CD4-positive, alpha-beta memory T cell (primary cell): ENCODE measurements at regions of chr6 and their contacts with region 1.

Region 1: GRCh38 chr6:149545754-149546528 is at the start of gene PPIL4:
- DNase-seq: peak; percentile 94 to 98 (median 97)
- H3K4me3 ChIP-seq: peak within 1 kb of the TSS; percentile 68 to 74
- H3K4me3 Mint-ChIP-seq: peak within 1 kb of the TSS; percentile 97 to 100 (median 98)
- H3K27ac ChIP-seq: peak within 1 kb of the TSS; percentile 100
- H3K27ac Mint-ChIP-seq: peak within 1 kb of the TSS; percentile 98 to 100 (median 100)
- H3K4me1 ChIP-seq: peaks cover 32% of the 10 kb centered on the region
- H3K4me1 Mint-ChIP-seq: peaks cover 27 to 50% (median 38%) of the 10 kb centered on the region in 4 donors
- H3K27me3 ChIP-seq: no peaks in the 10 kb centered on the region
- H3K27me3 Mint-ChIP-seq: peaks cover 0 to 3% of the 10 kb centered on the region in 2 donors
- total RNA-seq, gene PPIL4: 33.1 to 35.7 TPM

Region 2: DNA sequence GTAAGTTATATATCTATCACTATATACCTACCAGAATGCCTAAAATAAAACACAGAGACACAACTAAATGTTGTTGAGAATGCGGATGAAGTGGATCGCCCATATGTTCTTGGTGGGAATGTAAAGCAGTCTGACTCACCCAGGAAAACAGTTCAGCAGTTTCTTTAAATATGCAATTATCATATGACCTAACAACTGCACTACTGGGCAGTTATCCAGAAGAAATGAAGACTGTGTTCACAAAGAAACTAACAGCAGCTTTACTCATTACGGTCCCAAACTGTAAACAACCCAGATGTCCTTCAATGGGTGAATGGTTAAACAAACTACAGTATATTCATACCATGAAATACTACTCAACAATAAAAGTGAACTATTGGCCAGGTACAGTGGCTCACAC is 46.9 kb before region 1 on chr6:
- CTCF ChIA-PET with region 1: interaction called, 3 read pairs
- POLR2A ChIA-PET with region 1: interaction called, 15 read pairs
- intact Hi-C with region 1: loop called (anchors 5 kb)
- DNase-seq: no peak
- H3K4me3 ChIP-seq: no peak overlapping the region
- H3K4me3 Mint-ChIP-seq: no peak overlapping the region
- H3K27ac ChIP-seq: no peak overlapping the region
- H3K27ac Mint-ChIP-seq: peak overlapping the region in 6 of 7 donors; percentile 51 to 96 (median 84)
- H3K4me1 ChIP-seq: peaks cover 52% of the 10 kb centered on the region
- H3K4me1 Mint-ChIP-seq: peaks cover 29 to 61% (median 40%) of the 10 kb centered on the region in 4 donors
- H3K27me3 ChIP-seq: no peaks in the 10 kb centered on the region
- H3K27me3 Mint-ChIP-seq: no peaks in the 10 kb centered on the region

Region 3: GRCh38 chr6:149648148-149649145 is 102.5 kb after region 1 on chr6 and contains the start of gene KATNA1:
- CTCF ChIA-PET with region 1: interaction called, 3 read pairs
- POLR2A ChIA-PET with region 1: interaction called, 4 read pairs
- intact Hi-C with region 1: loop called (anchors 1 kb)
- DNase-seq: peak; percentile 83 to 87 (median 84)
- H3K4me3 ChIP-seq: peak within 1 kb of the TSS; percentile 61 to 84
- H3K4me3 Mint-ChIP-seq: peak within 1 kb of the TSS; percentile 82 to 94 (median 92)
- H3K27ac ChIP-seq: peak within 1 kb of the TSS; percentile 74
- H3K27ac Mint-ChIP-seq: peak within 1 kb of the TSS; percentile 85 to 95 (median 90)
- H3K4me1 ChIP-seq: peaks cover 35% of the 10 kb centered on the region
- H3K4me1 Mint-ChIP-seq: peaks cover 14 to 45% (median 25%) of the 10 kb centered on the region in 4 donors
- H3K27me3 ChIP-seq: no peaks in the 10 kb centered on the region
- H3K27me3 Mint-ChIP-seq: no peaks in the 10 kb centered on the region
- total RNA-seq, gene KATNA1: 18.2 to 21.4 TPM

Region 4: DNA sequence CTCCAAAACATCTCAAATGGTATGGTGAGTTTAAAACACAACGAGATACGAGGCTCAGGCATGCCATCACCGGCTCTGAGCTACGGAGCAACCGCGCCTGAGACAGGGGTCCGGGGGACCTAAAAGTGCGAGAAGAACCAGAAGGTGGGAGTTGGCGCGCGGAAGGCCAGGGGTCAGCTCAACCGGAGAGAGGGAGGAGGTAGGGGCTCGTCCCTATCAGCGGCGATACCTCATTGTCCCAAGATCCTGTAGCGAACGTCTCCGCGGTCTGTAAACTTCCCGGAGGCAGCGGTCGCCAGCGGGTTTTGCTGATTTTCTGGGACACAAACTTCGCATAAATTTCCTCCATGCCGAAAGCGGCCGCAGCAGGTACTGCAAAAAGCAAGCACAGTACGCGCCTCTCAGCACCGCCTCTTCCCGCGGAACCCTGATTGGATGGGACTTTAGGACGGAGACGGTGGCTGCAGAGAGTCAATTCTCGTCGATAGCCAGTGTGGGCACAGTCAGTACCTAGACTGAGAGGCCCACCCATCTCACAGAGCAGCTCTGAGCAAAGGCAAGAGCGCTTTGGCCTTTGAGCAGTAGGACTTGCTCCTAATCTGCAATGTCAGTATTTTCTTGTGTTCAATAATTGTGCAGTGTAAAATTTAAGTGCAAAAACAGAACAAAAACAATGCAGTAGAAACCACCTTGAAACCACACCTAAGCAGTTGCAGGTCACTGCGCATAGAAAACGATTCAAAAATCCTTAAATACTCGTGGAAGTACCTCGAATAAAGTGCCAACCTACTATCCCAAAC is 200.4 kb after region 1 on chr6 and contains the start of gene NUP43:
- CTCF ChIA-PET with region 1: interaction called, 4 read pairs
- POLR2A ChIA-PET with region 1: interaction called, 13 read pairs
- intact Hi-C with region 1: loop called (anchors 5 kb)
- DNase-seq: peak; percentile 89 to 92 (median 89)
- H3K4me3 ChIP-seq: peak within 1 kb of the TSS; percentile 87 to 90
- H3K4me3 Mint-ChIP-seq: peak within 1 kb of the TSS; percentile 92 to 99 (median 97)
- H3K27ac ChIP-seq: peak within 1 kb of the TSS; percentile 78
- H3K27ac Mint-ChIP-seq: peak within 1 kb of the TSS; percentile 88 to 97 (median 94)
- H3K4me1 ChIP-seq: peaks cover 36% of the 10 kb centered on the region
- H3K4me1 Mint-ChIP-seq: peaks cover 18 to 47% (median 31%) of the 10 kb centered on the region in 4 donors
- H3K27me3 ChIP-seq: no peaks in the 10 kb centered on the region
- H3K27me3 Mint-ChIP-seq: no peaks in the 10 kb centered on the region
- total RNA-seq, gene NUP43: 56.0 to 58.3 TPM

Region 5: GRCh38 chr6:149925974-149926777 is 380.2 kb after region 1 on chr6:
- CTCF ChIA-PET with region 1: interaction called, 3 read pairs
- POLR2A ChIA-PET with region 1: no interaction called
- intact Hi-C with region 1: loop called (anchors 1 kb)
- DNase-seq: peak; percentile 59 to 70 (median 63)
- H3K4me3 ChIP-seq: no peak overlapping the region
- H3K4me3 Mint-ChIP-seq: peak overlapping the region; percentile 14 to 60 (median 28)
- H3K27ac ChIP-seq: no peak overlapping the region
- H3K27ac Mint-ChIP-seq: peak overlapping the region in 1 of 7 donors; percentile 5
- H3K4me1 ChIP-seq: peaks cover 29% of the 10 kb centered on the region
- H3K4me1 Mint-ChIP-seq: peaks cover 11 to 38% (median 21%) of the 10 kb centered on the region in 4 donors
- H3K27me3 ChIP-seq: peaks cover 47% of the 10 kb centered on the region
- H3K27me3 Mint-ChIP-seq: peaks cover 73 to 82% of the 10 kb centered on the region in 2 donors